GM18951 (cell line): ENCODE measurements at regions of chr5 and their contacts with region 1.

Region 1: DNA sequence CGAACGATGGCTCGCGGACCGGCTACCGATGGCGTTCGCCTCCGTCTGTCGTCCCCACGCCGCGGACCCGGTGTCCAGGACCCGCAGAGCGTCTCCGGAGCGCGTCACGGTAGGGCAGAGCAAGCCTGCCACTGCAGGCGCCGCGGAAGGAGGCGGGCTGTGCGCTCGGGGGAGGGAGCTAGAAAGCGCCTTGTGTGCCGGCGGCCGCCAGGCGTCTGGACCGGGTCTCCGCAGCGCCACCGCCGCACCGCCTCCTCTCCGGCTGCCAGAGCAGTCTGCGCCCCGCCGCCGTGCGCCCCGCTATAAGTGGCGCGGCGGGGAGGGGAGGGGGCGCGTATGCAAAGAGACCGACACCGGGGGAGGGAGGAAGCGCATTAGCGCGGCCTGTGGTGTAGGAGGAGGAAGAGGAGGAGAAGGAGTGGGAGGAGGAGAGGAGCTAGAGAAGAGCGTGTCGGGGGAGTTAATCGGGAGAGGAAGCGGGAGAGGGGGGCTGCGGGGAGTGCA is at the start of gene ENC1:
- POLR2A ChIP-seq: peak; percentile 99

Region 2: GRCh38 chr5:74035521-74035981 is 605.0 kb before region 1 on chr5:
- in situ Hi-C with region 1: loop called (anchors 25 kb)
- POLR2A ChIP-seq: no peak

Region 3: GRCh38 chr5:74357827-74358226 is 282.7 kb before region 1 on chr5:
- in situ Hi-C with region 1: no loop called
- POLR2A ChIP-seq: no peak